ENCODE measurements at regions of chr5 and their contacts with region 1.

Region 1: DNA sequence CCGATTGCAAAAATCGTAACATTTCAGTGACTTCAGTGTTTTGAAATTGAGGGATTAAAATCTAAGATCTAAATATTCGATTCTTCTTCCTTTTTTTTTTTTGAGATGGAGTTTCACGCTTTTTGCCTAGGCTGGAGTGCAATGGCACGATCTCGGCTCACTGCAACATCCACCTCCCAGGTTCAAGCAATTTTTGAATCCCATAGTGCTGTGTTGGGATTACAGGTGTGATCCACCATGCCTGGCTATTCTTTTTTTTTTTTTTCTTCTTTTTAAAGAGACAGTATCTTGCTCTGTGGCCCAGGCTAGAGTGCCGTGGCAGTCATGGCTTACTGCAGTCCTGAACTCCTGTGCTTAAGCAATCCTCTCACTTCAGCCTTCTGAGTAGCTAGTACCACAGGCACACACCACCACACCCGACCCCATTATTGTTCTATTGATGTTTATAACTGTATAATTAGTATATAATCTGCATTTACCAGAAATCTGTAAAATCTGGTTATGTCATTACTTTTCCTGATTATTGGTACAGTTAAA is 42.7 kb downstream of the NSD1 start:
- DNase-seq: no peak
- H3K4me3 ChIP-seq: no peak overlapping the region
- H3K27ac ChIP-seq: no peak overlapping the region
- H3K4me1 ChIP-seq: no peaks in the 10 kb centered on the region
- H3K27me3 ChIP-seq: no peaks in the 10 kb centered on the region
- CTCF ChIP-seq: no peak
- POLR2A ChIP-seq: no peak

Region 2: GRCh38 chr5:176921714-176922113 is 254.5 kb before region 1 on chr5:
- intact Hi-C with region 1: loop called (anchors 5 kb)
- DNase-seq: no peak
- H3K4me3 ChIP-seq: no peak overlapping the region
- H3K27ac ChIP-seq: no peak overlapping the region
- H3K4me1 ChIP-seq: no peaks in the 10 kb centered on the region
- H3K27me3 ChIP-seq: no peaks in the 10 kb centered on the region
- CTCF ChIP-seq: no peak
- POLR2A ChIP-seq: no peak

Region 3: DNA sequence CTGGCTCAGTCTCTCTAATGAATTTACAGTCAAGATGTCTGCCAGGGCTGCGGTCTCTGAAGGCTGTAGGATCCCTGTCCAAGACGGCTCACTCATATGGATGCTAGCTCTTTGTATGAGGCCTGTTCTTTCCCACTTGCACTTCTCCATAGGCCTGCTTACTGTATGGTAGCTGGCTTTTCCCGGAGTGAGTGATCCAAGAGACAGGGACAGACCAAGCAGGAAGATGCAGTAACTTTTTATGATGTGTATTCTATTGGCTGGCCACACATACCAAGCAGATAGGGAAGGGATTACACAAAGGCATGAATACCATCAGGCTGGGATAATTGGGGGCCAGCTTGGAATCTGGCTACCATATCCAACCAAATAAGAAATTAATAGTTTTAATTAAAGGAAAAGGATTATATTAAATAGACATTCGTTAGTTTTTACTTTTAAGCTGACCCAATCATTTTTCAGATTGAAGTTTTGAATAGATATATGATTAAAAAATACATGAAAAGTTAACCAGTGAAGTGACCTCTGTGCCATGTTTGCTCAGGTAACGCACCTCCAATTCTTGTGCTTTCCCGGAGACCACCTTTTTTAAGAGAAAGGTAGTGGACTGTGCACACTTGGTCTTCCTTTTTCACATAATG is 22.1 kb before region 1 on chr5:
- intact Hi-C with region 1: no loop called
- DNase-seq: no peak
- H3K4me3 ChIP-seq: no peak overlapping the region
- H3K27ac ChIP-seq: no peak overlapping the region
- H3K4me1 ChIP-seq: no peaks in the 10 kb centered on the region
- H3K27me3 ChIP-seq: no peaks in the 10 kb centered on the region
- CTCF ChIP-seq: no peak
- POLR2A ChIP-seq: no peak

Region 4: DNA sequence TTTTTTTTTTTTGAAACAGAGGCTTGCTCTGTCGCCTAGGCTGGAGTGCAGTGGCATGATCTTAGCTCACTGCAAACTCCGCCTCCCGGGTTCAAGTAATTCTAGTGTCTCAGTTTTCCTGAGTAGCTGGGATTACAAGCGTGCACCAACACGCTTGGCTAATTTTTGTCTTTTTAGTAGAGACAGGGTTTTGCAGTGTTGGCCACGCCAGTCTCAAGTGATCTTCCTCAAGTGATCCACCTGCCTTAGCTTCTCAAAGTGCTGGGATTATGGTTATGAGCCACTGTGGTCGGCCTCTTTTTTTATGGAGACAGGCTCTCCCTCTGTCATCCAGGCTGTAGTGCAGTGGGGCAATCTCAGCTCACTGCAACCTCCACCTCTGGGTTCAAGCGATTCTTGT is 44.3 kb after region 1 on chr5:
- intact Hi-C with region 1: no loop called
- DNase-seq: no peak
- H3K4me3 ChIP-seq: no peak overlapping the region
- H3K27ac ChIP-seq: no peak overlapping the region
- H3K4me1 ChIP-seq: no peaks in the 10 kb centered on the region
- H3K27me3 ChIP-seq: no peaks in the 10 kb centered on the region
- CTCF ChIP-seq: no peak
- POLR2A ChIP-seq: no peak

Measured in breast epithelium (tissue), 4 donors.